Sigmoid colon (tissue), 7 donors: ENCODE measurements at regions of chr1 and their contacts with region 1.

Region 1: DNA sequence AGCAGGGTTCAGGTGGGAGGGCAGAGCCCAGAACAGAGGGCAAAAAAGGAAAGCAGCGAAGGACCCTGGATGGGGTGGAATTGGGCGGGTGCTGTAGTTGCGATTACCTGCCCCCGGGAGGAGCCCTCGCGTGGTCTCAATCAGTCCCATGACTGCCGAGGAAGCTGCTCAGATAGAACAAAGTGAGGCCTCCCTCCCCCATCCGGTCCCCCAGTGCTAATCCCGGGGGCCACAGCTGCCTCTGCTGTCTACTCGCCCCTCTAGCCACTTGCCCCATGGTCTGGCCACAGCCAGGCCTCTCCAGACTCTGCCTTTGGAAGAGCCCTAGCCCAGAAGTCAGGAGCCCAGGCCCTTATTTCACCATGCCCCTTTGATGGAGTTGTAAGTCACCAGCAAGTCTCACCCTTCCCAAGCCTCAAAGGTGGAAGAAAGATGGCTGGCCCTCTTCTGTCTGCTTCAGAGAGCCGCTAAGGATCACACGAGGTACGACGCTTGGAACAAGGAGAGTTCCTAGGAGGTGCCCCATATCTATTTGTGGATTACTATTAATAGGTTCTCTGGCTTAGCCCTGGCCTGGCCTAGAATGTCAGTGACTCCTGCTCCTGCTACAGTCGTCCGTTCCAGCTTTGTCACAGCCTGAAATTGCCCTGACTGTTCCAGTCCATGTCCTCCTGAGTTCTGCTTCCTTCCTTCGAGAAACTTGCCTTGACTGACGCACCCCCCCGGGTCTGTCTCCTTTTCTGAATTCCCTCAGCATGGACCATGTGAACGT is 16.4 kb downstream of the ECHDC2 start:
- DNase-seq: no peak
- H3K4me3 ChIP-seq: no peak overlapping the region
- H3K27ac ChIP-seq: no peak overlapping the region
- H3K4me1 ChIP-seq: peaks cover 0 to 15% (median 2%) of the 10 kb centered on the region in 4 donors
- H3K27me3 ChIP-seq: no peaks in the 10 kb centered on the region
- CTCF ChIP-seq: peak in 2 of 4 experiments; percentile 14 to 26
- EP300 ChIP-seq: no peak
- POLR2A ChIP-seq: no peak

Region 2: DNA sequence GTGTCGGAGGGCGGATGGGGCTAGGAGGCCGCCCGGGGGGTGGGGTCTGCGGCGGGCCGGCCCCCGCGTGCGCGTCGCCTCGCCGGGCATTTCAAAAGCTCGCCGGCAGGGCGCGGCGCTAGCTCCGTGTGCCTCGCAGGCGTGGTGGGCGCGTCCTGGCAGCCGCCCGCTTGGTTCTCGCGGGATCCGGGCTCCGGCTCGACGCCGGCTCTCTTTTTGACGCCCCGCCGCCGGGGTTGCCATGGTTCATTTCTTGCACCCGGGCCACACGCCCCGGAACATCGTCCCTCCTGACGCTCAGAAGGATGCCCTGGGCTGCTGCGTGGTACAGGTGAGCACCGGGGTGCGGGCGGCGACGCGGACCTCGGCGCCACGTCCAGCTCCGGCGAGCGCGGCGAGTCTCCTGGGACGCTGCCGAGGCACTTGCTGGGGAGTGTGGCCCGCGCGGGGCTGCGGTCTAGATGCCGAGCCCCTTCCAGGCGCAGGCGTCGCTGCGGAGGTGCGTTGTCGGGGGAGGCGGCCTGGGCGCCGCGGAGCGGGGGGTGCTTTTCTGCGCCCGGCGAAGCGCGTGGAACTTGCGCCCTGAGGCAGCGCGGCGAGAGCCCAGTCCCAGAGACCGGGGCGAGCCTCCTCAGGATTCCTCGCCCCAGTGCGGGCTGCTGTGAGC is 62.3 kb before region 1 on chr1 and contains the start of gene ZYG11A:
- intact Hi-C with region 1: no loop called
- DNase-seq: no peak
- H3K4me3 ChIP-seq: peak within 1 kb of the TSS; percentile 14 to 47 (median 38)
- H3K27ac ChIP-seq: no peak within 1 kb of the TSS
- H3K4me1 ChIP-seq: peaks cover 0 to 16% (median 12%) of the 10 kb centered on the region in 4 donors
- H3K27me3 ChIP-seq: peaks cover 13 to 58% (median 24%) of the 10 kb centered on the region in 3 donors
- CTCF ChIP-seq: peak in 1 of 4 experiments; percentile 19
- EP300 ChIP-seq: no peak
- POLR2A ChIP-seq: no peak
- total RNA-seq, gene ZYG11A: not detected

Region 3: DNA sequence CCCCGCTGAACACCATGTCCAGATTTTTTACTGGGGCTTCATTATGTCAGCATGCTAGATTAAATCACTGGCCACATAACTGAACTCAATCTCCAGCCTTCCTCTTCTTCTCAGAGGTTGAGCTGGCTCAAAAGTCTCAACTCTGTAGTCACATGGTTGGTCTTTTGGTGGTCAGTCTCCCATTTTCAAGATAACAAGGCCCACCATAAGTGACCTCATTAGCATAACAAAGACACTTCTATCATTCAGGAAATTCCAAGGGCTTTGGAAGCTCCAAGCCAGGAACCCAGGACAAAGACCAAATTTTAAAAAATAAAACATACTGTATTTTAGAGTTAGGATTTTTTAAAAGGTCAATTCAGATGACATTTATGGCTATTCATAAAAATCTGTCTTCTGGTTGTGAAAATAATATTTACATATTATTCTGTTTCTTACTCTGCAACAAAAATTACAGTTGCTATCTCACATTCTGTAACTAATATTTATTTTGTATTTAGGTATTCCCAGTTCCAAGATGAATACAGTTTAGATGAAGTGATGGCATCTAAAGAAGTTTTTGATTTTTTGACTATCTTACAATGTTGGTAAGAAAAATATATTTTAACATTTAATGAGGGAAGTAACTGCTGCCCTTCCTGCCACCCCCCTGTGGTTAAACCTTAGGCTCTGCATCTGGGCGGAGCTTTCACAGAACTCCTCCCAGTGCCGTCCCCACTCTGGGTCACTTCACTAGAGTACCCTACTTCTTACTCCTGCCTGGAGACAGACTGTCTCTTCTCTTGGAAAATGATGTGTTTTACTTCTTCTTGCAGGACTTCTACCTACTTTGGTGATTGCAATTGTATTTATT is 71.3 kb after region 1 on chr1:
- intact Hi-C with region 1: no loop called
- DNase-seq: no peak
- H3K4me3 ChIP-seq: no peak overlapping the region
- H3K27ac ChIP-seq: no peak overlapping the region
- H3K4me1 ChIP-seq: no peaks in the 10 kb centered on the region
- H3K27me3 ChIP-seq: no peaks in the 10 kb centered on the region
- CTCF ChIP-seq: no peak
- EP300 ChIP-seq: no peak
- POLR2A ChIP-seq: no peak

Region 4: GRCh38 chr1:53134961-53135734 is 230.0 kb after region 1 on chr1:
- intact Hi-C with region 1: no loop called
- DNase-seq: peak; percentile 85
- H3K4me3 ChIP-seq: no peak overlapping the region
- H3K27ac ChIP-seq: peak overlapping the region; percentile 33 to 92 (median 83)
- H3K4me1 ChIP-seq: peaks cover 0 to 68% (median 45%) of the 10 kb centered on the region in 4 donors
- H3K27me3 ChIP-seq: no peaks in the 10 kb centered on the region
- CTCF ChIP-seq: no peak
- EP300 ChIP-seq: no peak
- POLR2A ChIP-seq: no peak

Region 5: GRCh38 chr1:53188099-53188498 is 283.0 kb after region 1 on chr1:
- intact Hi-C with region 1: loop called (anchors 5 kb)
- DNase-seq: peak; percentile 33
- H3K4me3 ChIP-seq: no peak overlapping the region
- H3K27ac ChIP-seq: no peak overlapping the region
- H3K4me1 ChIP-seq: no peaks in the 10 kb centered on the region
- H3K27me3 ChIP-seq: no peaks in the 10 kb centered on the region
- CTCF ChIP-seq: no peak
- EP300 ChIP-seq: no peak
- POLR2A ChIP-seq: no peak